HCT116 (cell line): ENCODE measurements at regions of chr2 and their contacts with region 1.

Region 1: GRCh38 chr2:157107877-157108276 is 149.6 kb upstream of the GALNT5 start:
- DNase-seq: no peak
- ATAC-seq: no peak
- H3K4me3 ChIP-seq: no peak overlapping the region
- H3K27ac ChIP-seq: no peak overlapping the region
- H3K4me1 ChIP-seq: no peaks in the 10 kb centered on the region
- H3K27me3 ChIP-seq: no peaks in the 10 kb centered on the region
- CTCF ChIP-seq: no peak
- POLR2A ChIP-seq: no peak
- RAD21 ChIP-seq: no peak

Region 2: GRCh38 chr2:156704617-156705016 is 403.3 kb before region 1 on chr2:
- CTCF ChIA-PET with region 1: no interaction called
- POLR2A ChIA-PET with region 1: no interaction called
- RAD21 ChIA-PET with region 1: no interaction called
- intact Hi-C with region 1: loop called (anchors 5 kb)
- DNase-seq: no peak
- ATAC-seq: no peak
- H3K4me3 ChIP-seq: no peak overlapping the region
- H3K27ac ChIP-seq: no peak overlapping the region
- H3K4me1 ChIP-seq: no peaks in the 10 kb centered on the region
- H3K27me3 ChIP-seq: no peaks in the 10 kb centered on the region
- CTCF ChIP-seq: no peak
- POLR2A ChIP-seq: no peak
- RAD21 ChIP-seq: no peak

Region 3: GRCh38 chr2:158079672-158080071 is 971.8 kb after region 1 on chr2:
- CTCF ChIA-PET with region 1: no interaction called
- POLR2A ChIA-PET with region 1: no interaction called
- RAD21 ChIA-PET with region 1: no interaction called
- intact Hi-C with region 1: no loop called
- DNase-seq: no peak
- ATAC-seq: no peak
- H3K4me3 ChIP-seq: no peak overlapping the region
- H3K27ac ChIP-seq: no peak overlapping the region
- H3K4me1 ChIP-seq: no peaks in the 10 kb centered on the region
- H3K27me3 ChIP-seq: no peaks in the 10 kb centered on the region
- CTCF ChIP-seq: no peak
- POLR2A ChIP-seq: no peak
- RAD21 ChIP-seq: no peak